Calu3 (cell line): ENCODE measurements at regions of chr6 and their contacts with region 1.

Region 1: GRCh38 chr6:165556116-165556843 is 106.8 kb downstream of the PDE10A start:
- DNase-seq: peak; percentile 46
- H3K4me3 Mint-ChIP-seq: peak overlapping the region; percentile 54
- H3K27ac Mint-ChIP-seq: peak overlapping the region; percentile 42
- H3K4me1 Mint-ChIP-seq: peaks cover 47% of the 10 kb centered on the region
- H3K27me3 Mint-ChIP-seq: no peaks in the 10 kb centered on the region
- CTCF ChIP-seq: no peak

Region 2: GRCh38 chr6:164996838-164997237 is 559.4 kb before region 1 on chr6:
- CTCF ChIA-PET with region 1: no interaction called
- intact Hi-C with region 1: loop called (anchors 5 kb)
- DNase-seq: peak; percentile 25
- H3K4me3 Mint-ChIP-seq: no peak overlapping the region
- H3K27ac Mint-ChIP-seq: peak overlapping the region; percentile 8
- H3K4me1 Mint-ChIP-seq: peaks cover 13% of the 10 kb centered on the region
- H3K27me3 Mint-ChIP-seq: no peaks in the 10 kb centered on the region
- CTCF ChIP-seq: no peak

Region 3: GRCh38 chr6:165573671-165574070 is 17.4 kb after region 1 on chr6:
- CTCF ChIA-PET with region 1: no interaction called
- intact Hi-C with region 1: loop called (anchors 2 kb)
- DNase-seq: peak; percentile 71
- H3K4me3 Mint-ChIP-seq: no peak overlapping the region
- H3K27ac Mint-ChIP-seq: no peak overlapping the region
- H3K4me1 Mint-ChIP-seq: peaks cover 41% of the 10 kb centered on the region
- H3K27me3 Mint-ChIP-seq: no peaks in the 10 kb centered on the region
- CTCF ChIP-seq: no peak

Region 4: DNA sequence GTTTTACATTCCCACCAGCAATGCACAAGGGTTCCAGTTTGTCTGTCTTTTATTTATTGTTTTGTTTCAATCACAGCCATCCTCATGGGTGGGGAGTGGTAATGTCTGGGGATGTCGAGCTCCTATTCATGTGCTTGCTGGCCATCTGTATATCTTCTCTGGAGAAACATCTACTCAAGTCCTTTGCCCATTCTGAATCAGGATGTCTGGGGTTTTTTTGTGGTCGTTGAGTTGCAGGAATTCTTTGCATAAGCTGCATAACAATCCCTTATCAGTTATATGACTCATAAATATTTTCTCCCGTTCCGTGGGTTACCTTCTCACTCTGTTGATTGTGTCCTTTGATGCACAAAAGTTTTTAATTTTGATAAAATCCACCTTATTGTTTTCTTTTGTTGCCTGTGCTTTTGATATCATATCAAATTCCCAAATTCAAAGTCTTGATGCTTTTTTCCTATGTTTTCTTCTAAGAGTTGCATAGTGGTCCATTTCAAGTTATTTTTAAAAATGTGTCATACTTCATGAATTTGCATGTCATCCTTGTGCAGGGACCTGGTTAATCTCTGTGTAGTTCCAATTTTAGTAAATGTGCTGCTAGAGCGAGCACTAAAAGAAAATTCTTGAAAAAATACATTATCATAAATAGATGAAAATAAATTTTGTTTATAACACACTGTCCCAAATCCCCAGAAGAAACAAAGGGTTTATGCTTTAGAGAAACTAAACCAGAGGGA is 161.6 kb after region 1 on chr6:
- CTCF ChIA-PET with region 1: no interaction called
- intact Hi-C with region 1: loop called (anchors 5 kb)
- DNase-seq: peak; percentile 35
- H3K4me3 Mint-ChIP-seq: peak overlapping the region; percentile 20
- H3K27ac Mint-ChIP-seq: peak overlapping the region; percentile 62
- H3K4me1 Mint-ChIP-seq: peaks cover 36% of the 10 kb centered on the region
- H3K27me3 Mint-ChIP-seq: no peaks in the 10 kb centered on the region
- CTCF ChIP-seq: no peak

Region 5: GRCh38 chr6:165850434-165851019 is 294.2 kb after region 1 on chr6:
- CTCF ChIA-PET with region 1: interaction called, 3 read pairs
- intact Hi-C with region 1: loop called (anchors 5 kb)
- DNase-seq: peak; percentile 77
- H3K4me3 Mint-ChIP-seq: no peak overlapping the region
- H3K27ac Mint-ChIP-seq: no peak overlapping the region
- H3K4me1 Mint-ChIP-seq: peaks cover 18% of the 10 kb centered on the region
- H3K27me3 Mint-ChIP-seq: peaks cover 17% of the 10 kb centered on the region
- CTCF ChIP-seq: peak; percentile 91